ENCODE measurements at regions of chr6 and their contacts with region 1.

Region 1: GRCh38 chr6:107957909-107958688 is at the start of gene SEC63:
- DNase-seq: peak; percentile 96
- ATAC-seq: peak; percentile 97
- H3K4me3 ChIP-seq: peak within 1 kb of the TSS; percentile 71 to 96 (median 77)
- H3K4me3 Mint-ChIP-seq: peak within 1 kb of the TSS; percentile 94
- H3K27ac ChIP-seq: peak within 1 kb of the TSS; percentile 60 to 73
- H3K27ac Mint-ChIP-seq: peak within 1 kb of the TSS; percentile 94
- H3K4me1 ChIP-seq: peaks cover 12 to 21% of the 10 kb centered on the region in 2 donors
- H3K4me1 Mint-ChIP-seq: peaks cover 27% of the 10 kb centered on the region
- H3K27me3 ChIP-seq: no peaks in the 10 kb centered on the region
- H3K27me3 Mint-ChIP-seq: no peaks in the 10 kb centered on the region
- CTCF ChIP-seq: no peak
- total RNA-seq, gene SEC63: 74.2 and 79.5 TPM in 2 replicates

Region 2: GRCh38 chr6:106325336-106326178 is 1632.5 kb before region 1 on chr6 and contains the start of gene ATG5:
- CTCF ChIA-PET with region 1: no interaction called
- POLR2A ChIA-PET with region 1: no interaction called
- intact Hi-C with region 1: loop called (anchors 5 kb)
- DNase-seq: peak; percentile 99
- ATAC-seq: peak; percentile 92
- H3K4me3 ChIP-seq: peak within 1 kb of the TSS; percentile 87 to 99 (median 94)
- H3K4me3 Mint-ChIP-seq: peak within 1 kb of the TSS; percentile 100
- H3K27ac ChIP-seq: peak within 1 kb of the TSS; percentile 89 to 91
- H3K27ac Mint-ChIP-seq: peak within 1 kb of the TSS; percentile 98
- H3K4me1 ChIP-seq: peaks cover 16 to 20% of the 10 kb centered on the region in 2 donors
- H3K4me1 Mint-ChIP-seq: peaks cover 44% of the 10 kb centered on the region
- H3K27me3 ChIP-seq: peaks cover 0 to 6% (median 4%) of the 10 kb centered on the region in 4 experiments
- H3K27me3 Mint-ChIP-seq: peaks cover 27% of the 10 kb centered on the region
- CTCF ChIP-seq: no peak
- total RNA-seq, gene ATG5: 26.3 and 34.0 TPM in 2 replicates

Region 3: GRCh38 chr6:107459283-107460082 is 498.6 kb before region 1 on chr6 and contains the start of gene PDSS2:
- CTCF ChIA-PET with region 1: no interaction called
- POLR2A ChIA-PET with region 1: no interaction called
- intact Hi-C with region 1: loop called (anchors 1 kb)
- DNase-seq: peak; percentile 96
- ATAC-seq: peak; percentile 96
- H3K4me3 ChIP-seq: peak within 1 kb of the TSS; percentile 70 to 96 (median 93)
- H3K4me3 Mint-ChIP-seq: peak within 1 kb of the TSS; percentile 88
- H3K27ac ChIP-seq: peak within 1 kb of the TSS; percentile 88 to 91
- H3K27ac Mint-ChIP-seq: peak within 1 kb of the TSS; percentile 99
- H3K4me1 ChIP-seq: peaks cover 10 to 13% of the 10 kb centered on the region in 2 donors
- H3K4me1 Mint-ChIP-seq: peaks cover 25% of the 10 kb centered on the region
- H3K27me3 ChIP-seq: no peaks in the 10 kb centered on the region
- H3K27me3 Mint-ChIP-seq: no peaks in the 10 kb centered on the region
- CTCF ChIP-seq: peak; percentile 52
- total RNA-seq, gene PDSS2: 16.9 and 18.3 TPM in 2 replicates

Region 4: GRCh38 chr6:107820338-107821261 is 137.5 kb before region 1 on chr6:
- CTCF ChIA-PET with region 1: no interaction called
- POLR2A ChIA-PET with region 1: no interaction called
- intact Hi-C with region 1: loop called (anchors 1 kb)
- DNase-seq: peak; percentile 69
- ATAC-seq: no peak
- H3K4me3 ChIP-seq: peak overlapping the region in 4 of 5 experiments; percentile 7 to 43 (median 29)
- H3K4me3 Mint-ChIP-seq: peak overlapping the region; percentile 68
- H3K27ac ChIP-seq: peak overlapping the region; percentile 31 to 95
- H3K27ac Mint-ChIP-seq: peak overlapping the region; percentile 70
- H3K4me1 ChIP-seq: peaks cover 51 to 64% of the 10 kb centered on the region in 2 donors
- H3K4me1 Mint-ChIP-seq: peaks cover 71% of the 10 kb centered on the region
- H3K27me3 ChIP-seq: no peaks in the 10 kb centered on the region
- H3K27me3 Mint-ChIP-seq: no peaks in the 10 kb centered on the region
- CTCF ChIP-seq: no peak

Region 5: DNA sequence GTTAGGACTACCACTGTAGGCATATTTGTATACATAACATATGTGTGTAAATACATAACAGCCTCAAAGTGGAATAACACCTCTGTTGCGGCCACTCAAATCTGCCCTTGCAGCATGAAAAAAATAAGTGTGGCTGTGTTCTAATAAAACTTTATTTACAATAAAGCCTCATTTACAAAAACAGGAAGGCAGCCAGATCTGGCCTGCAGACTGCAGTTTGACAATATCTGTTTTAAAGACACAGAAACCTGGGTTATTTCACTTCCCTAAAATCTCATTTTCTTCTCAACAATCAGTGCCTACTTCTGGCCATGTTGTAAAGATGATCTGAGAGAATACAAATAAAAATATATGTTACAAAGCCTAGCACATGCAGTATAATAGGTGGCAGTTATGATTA is 80.1 kb before region 1 on chr6:
- CTCF ChIA-PET with region 1: no interaction called
- POLR2A ChIA-PET with region 1: no interaction called
- intact Hi-C with region 1: loop called (anchors 5 kb)
- DNase-seq: peak; percentile 53
- ATAC-seq: peak; percentile 53
- H3K4me3 ChIP-seq: no peak overlapping the region
- H3K4me3 Mint-ChIP-seq: no peak overlapping the region
- H3K27ac ChIP-seq: peak overlapping the region; percentile 37 to 63
- H3K27ac Mint-ChIP-seq: peak overlapping the region; percentile 50
- H3K4me1 ChIP-seq: peaks cover 11% of the 10 kb centered on the region in 2 donors
- H3K4me1 Mint-ChIP-seq: peaks cover 15% of the 10 kb centered on the region
- H3K27me3 ChIP-seq: no peaks in the 10 kb centered on the region
- H3K27me3 Mint-ChIP-seq: no peaks in the 10 kb centered on the region
- CTCF ChIP-seq: no peak

Region 6: GRCh38 chr6:107894821-107895396 is 63.2 kb before region 1 on chr6:
- CTCF ChIA-PET with region 1: interaction called, 3 read pairs
- POLR2A ChIA-PET with region 1: no interaction called
- intact Hi-C with region 1: loop called (anchors 5 kb)
- DNase-seq: peak; percentile 77
- ATAC-seq: peak; percentile 80
- H3K4me3 ChIP-seq: peak overlapping the region in 1 of 5 experiments; percentile 27
- H3K4me3 Mint-ChIP-seq: peak overlapping the region; percentile 48
- H3K27ac ChIP-seq: peak overlapping the region; percentile 75 to 76
- H3K27ac Mint-ChIP-seq: peak overlapping the region; percentile 96
- H3K4me1 ChIP-seq: peaks cover 49 to 53% of the 10 kb centered on the region in 2 donors
- H3K4me1 Mint-ChIP-seq: peaks cover 55% of the 10 kb centered on the region
- H3K27me3 ChIP-seq: no peaks in the 10 kb centered on the region
- H3K27me3 Mint-ChIP-seq: no peaks in the 10 kb centered on the region
- CTCF ChIP-seq: no peak

Region 7: GRCh38 chr6:108074359-108075144 is 116.5 kb after region 1 on chr6 and contains the start of gene OSTM1:
- CTCF ChIA-PET with region 1: no interaction called
- POLR2A ChIA-PET with region 1: no interaction called
- intact Hi-C with region 1: loop called (anchors 1 kb)
- DNase-seq: peak; percentile 95
- ATAC-seq: peak; percentile 96
- H3K4me3 ChIP-seq: peak within 1 kb of the TSS; percentile 75 to 96 (median 90)
- H3K4me3 Mint-ChIP-seq: peak within 1 kb of the TSS; percentile 89
- H3K27ac ChIP-seq: peak within 1 kb of the TSS; percentile 78 to 91
- H3K27ac Mint-ChIP-seq: peak within 1 kb of the TSS; percentile 93
- H3K4me1 ChIP-seq: peaks cover 15 to 18% of the 10 kb centered on the region in 2 donors
- H3K4me1 Mint-ChIP-seq: peaks cover 29% of the 10 kb centered on the region
- H3K27me3 ChIP-seq: no peaks in the 10 kb centered on the region
- H3K27me3 Mint-ChIP-seq: peaks cover 5% of the 10 kb centered on the region
- CTCF ChIP-seq: no peak
- total RNA-seq, gene OSTM1: 33.2 and 41.7 TPM in 2 replicates